Caco-2 (cell line): ENCODE measurements at regions of chr6 and their contacts with region 1.

Region 1: GRCh38 chr6:42745707-42746462 is at the start of gene TBCC:
- DNase-seq: peak; percentile 94 to 97
- H3K4me3 ChIP-seq: peak within 1 kb of the TSS; percentile 58
- H3K4me3 Mint-ChIP-seq: peak within 1 kb of the TSS; percentile 83
- H3K27ac Mint-ChIP-seq: peak within 1 kb of the TSS; percentile 95
- H3K4me1 ChIP-seq: peaks cover 15% of the 10 kb centered on the region
- H3K4me1 Mint-ChIP-seq: peaks cover 6% of the 10 kb centered on the region
- H3K27me3 ChIP-seq: no peaks in the 10 kb centered on the region
- H3K27me3 Mint-ChIP-seq: no peaks in the 10 kb centered on the region
- CTCF ChIP-seq: no peak
- total RNA-seq, gene TBCC: 17.0 and 20.4 TPM in 2 replicates

Region 2: GRCh38 chr6:42563697-42564505 is 182.0 kb before region 1 on chr6 and contains the start of gene UBR2:
- CTCF ChIA-PET with region 1: interaction called, 3 read pairs
- POLR2A ChIA-PET with region 1: interaction called, 4 read pairs
- intact Hi-C with region 1: loop called (anchors 10 kb)
- DNase-seq: peak; percentile 96 to 98
- H3K4me3 ChIP-seq: peak within 1 kb of the TSS; percentile 84
- H3K4me3 Mint-ChIP-seq: peak within 1 kb of the TSS; percentile 98
- H3K27ac Mint-ChIP-seq: peak within 1 kb of the TSS; percentile 96
- H3K4me1 ChIP-seq: no peaks in the 10 kb centered on the region
- H3K4me1 Mint-ChIP-seq: peaks cover 16% of the 10 kb centered on the region
- H3K27me3 ChIP-seq: no peaks in the 10 kb centered on the region
- H3K27me3 Mint-ChIP-seq: no peaks in the 10 kb centered on the region
- CTCF ChIP-seq: peak; percentile 35 to 76
- total RNA-seq, gene UBR2: 21.7 TPM in 2 replicates

Region 3: GRCh38 chr6:42688281-42688680 is 57.6 kb before region 1 on chr6:
- CTCF ChIA-PET with region 1: no interaction called
- POLR2A ChIA-PET with region 1: no interaction called
- intact Hi-C with region 1: no loop called
- DNase-seq: no peak
- H3K4me3 ChIP-seq: no peak overlapping the region
- H3K4me3 Mint-ChIP-seq: no peak overlapping the region
- H3K27ac Mint-ChIP-seq: no peak overlapping the region
- H3K4me1 ChIP-seq: peaks cover 7% of the 10 kb centered on the region
- H3K4me1 Mint-ChIP-seq: peaks cover 5% of the 10 kb centered on the region
- H3K27me3 ChIP-seq: no peaks in the 10 kb centered on the region
- H3K27me3 Mint-ChIP-seq: no peaks in the 10 kb centered on the region
- CTCF ChIP-seq: no peak

Region 4: GRCh38 chr6:42769836-42770235 is 24.0 kb after region 1 on chr6:
- CTCF ChIA-PET with region 1: no interaction called
- POLR2A ChIA-PET with region 1: interaction called, 10 read pairs
- intact Hi-C with region 1: no loop called
- DNase-seq: no peak
- H3K4me3 ChIP-seq: no peak overlapping the region
- H3K4me3 Mint-ChIP-seq: no peak overlapping the region
- H3K27ac Mint-ChIP-seq: no peak overlapping the region
- H3K4me1 ChIP-seq: no peaks in the 10 kb centered on the region
- H3K4me1 Mint-ChIP-seq: no peaks in the 10 kb centered on the region
- H3K27me3 ChIP-seq: no peaks in the 10 kb centered on the region
- H3K27me3 Mint-ChIP-seq: no peaks in the 10 kb centered on the region
- CTCF ChIP-seq: no peak

Region 5: DNA sequence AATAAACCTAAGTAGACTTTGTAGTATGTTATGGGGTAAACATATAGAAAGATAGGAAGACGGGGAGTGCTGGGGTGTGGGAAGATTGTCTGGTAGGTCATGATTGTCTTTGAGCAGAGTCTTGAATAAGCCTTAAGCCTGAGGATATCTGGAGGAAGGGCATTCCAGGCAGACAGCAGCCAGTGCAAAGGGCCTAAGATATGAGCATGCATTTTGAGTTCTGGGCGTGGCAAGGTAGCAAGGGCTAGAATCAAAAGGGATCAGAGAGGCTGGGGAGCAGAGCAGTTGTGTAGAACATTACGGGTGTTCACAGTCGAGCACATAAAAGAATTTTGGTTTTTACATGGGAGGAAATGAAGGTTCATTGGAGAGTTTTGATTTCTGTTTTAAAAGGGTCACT is 50.3 kb after region 1 on chr6:
- CTCF ChIA-PET with region 1: no interaction called
- POLR2A ChIA-PET with region 1: no interaction called
- intact Hi-C with region 1: no loop called
- DNase-seq: no peak
- H3K4me3 ChIP-seq: no peak overlapping the region
- H3K4me3 Mint-ChIP-seq: no peak overlapping the region
- H3K27ac Mint-ChIP-seq: no peak overlapping the region
- H3K4me1 ChIP-seq: no peaks in the 10 kb centered on the region
- H3K4me1 Mint-ChIP-seq: peaks cover 6% of the 10 kb centered on the region
- H3K27me3 ChIP-seq: no peaks in the 10 kb centered on the region
- H3K27me3 Mint-ChIP-seq: no peaks in the 10 kb centered on the region
- CTCF ChIP-seq: no peak

Region 6: GRCh38 chr6:42879372-42880239 is 133.7 kb after region 1 on chr6 and contains the start of gene RPL7L1:
- CTCF ChIA-PET with region 1: no interaction called
- POLR2A ChIA-PET with region 1: interaction called, 14 read pairs
- intact Hi-C with region 1: loop called (anchors 1 kb)
- DNase-seq: peak; percentile 83 to 85
- H3K4me3 ChIP-seq: peak within 1 kb of the TSS; percentile 75
- H3K4me3 Mint-ChIP-seq: peak within 1 kb of the TSS; percentile 94
- H3K27ac Mint-ChIP-seq: peak within 1 kb of the TSS; percentile 100
- H3K4me1 ChIP-seq: no peaks in the 10 kb centered on the region
- H3K4me1 Mint-ChIP-seq: no peaks in the 10 kb centered on the region
- H3K27me3 ChIP-seq: no peaks in the 10 kb centered on the region
- H3K27me3 Mint-ChIP-seq: no peaks in the 10 kb centered on the region
- CTCF ChIP-seq: no peak
- total RNA-seq, gene RPL7L1: 103 and 110 TPM in 2 replicates

Region 7: GRCh38 chr6:42928986-42929820 is 183.3 kb after region 1 on chr6 and contains the start of gene CNPY3:
- CTCF ChIA-PET with region 1: no interaction called
- POLR2A ChIA-PET with region 1: interaction called, 10 read pairs
- intact Hi-C with region 1: no loop called
- DNase-seq: peak; percentile 95 to 96
- H3K4me3 ChIP-seq: peak within 1 kb of the TSS; percentile 56
- H3K4me3 Mint-ChIP-seq: peak within 1 kb of the TSS; percentile 100
- H3K27ac Mint-ChIP-seq: peak within 1 kb of the TSS; percentile 76
- H3K4me1 ChIP-seq: peaks cover 8% of the 10 kb centered on the region
- H3K4me1 Mint-ChIP-seq: peaks cover 13% of the 10 kb centered on the region
- H3K27me3 ChIP-seq: no peaks in the 10 kb centered on the region
- H3K27me3 Mint-ChIP-seq: no peaks in the 10 kb centered on the region
- CTCF ChIP-seq: no peak
- total RNA-seq, gene CNPY3: 49.2 and 56.1 TPM in 2 replicates